ENCODE measurements at regions of chr6 and their contacts with region 1.

Region 1: DNA sequence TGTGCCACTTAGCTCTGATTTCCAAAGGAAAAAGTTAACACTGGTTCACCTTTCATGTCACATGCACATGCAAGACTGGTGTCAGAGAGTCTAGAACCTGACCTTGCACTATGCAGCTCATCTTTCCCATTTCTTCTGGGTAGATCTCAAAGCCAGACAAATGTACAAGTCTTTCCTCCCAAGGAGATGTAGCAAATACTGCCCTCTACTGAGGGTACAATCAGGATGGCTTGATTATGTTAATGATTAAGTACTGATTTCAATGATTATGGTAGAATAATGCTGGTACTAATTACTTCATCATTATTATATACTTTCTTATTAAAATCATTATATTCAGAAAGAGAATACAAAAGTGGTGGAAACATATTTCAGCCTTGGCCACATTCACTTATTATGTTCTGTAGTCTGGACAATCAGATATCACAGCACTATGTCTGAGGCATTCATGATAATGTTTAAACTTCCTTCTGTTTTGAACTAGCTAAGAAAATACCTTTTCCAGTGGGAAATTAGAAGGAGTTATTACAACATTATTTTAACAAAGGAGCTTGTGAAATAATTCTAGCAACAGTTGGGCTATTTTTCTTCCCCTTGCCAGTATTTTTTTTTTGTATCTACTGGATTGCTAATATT is 68.5 kb upstream of the FOXO3 start:
- DNase-seq: no peak
- ATAC-seq: no peak
- H3K4me3 ChIP-seq: no peak overlapping the region
- H3K27ac ChIP-seq: no peak overlapping the region
- H3K4me1 ChIP-seq: no peaks in the 10 kb centered on the region
- H3K27me3 ChIP-seq: no peaks in the 10 kb centered on the region

Region 2: DNA sequence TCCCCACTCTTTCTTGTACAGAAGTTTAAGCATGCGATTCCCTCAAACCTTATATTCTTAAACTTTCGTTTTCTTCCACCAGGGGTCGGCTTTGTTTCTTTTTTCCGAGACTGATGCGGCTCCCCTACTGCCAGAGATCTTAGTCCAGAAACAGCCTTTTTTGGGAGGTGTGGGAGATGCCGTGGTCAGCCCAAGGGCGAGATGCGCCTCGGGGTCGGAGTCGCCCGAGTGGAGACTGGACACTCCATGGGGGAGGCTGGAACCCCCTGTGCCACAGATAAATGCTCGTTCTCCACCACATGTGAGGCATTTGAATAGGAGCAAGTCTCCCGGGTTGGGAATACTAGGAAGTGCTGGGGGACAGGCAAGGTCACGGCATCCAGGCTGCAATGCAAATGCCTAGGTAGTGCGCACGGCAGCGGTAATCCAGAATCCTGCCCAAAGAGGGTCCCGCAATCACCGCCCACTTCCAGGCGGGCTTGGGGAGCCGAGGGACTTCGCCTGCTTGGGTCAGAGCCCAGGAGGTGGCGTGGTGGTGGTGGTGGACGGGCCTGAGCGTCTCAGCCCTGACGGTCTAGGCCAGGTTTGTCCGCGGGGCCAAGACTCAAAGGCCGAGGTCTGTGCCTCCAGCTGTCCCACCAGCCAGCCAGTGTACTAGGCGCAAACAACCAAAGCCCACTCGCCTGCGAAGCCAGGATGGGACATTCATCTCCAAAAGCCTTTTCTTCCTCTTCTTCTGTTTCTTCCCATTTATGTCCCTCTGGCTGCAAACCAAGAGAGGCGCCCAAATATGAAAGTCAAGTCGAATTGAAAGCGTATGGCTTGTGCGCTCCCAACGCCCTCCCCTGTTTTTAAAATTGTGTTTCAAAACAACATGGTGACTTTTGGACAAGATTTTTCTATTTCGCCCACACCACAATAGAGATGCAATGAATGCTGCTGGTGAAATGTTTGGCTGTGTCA is 378.4 kb before region 1 on chr6:
- intact Hi-C with region 1: loop called in 1 of 4 experiments (anchors 10 kb)
- DNase-seq: peak in 2 of 3 donors; percentile 20 to 56
- ATAC-seq: peak; percentile 18 to 37
- H3K4me3 ChIP-seq: peak overlapping the region; percentile 18
- H3K27ac ChIP-seq: no peak overlapping the region
- H3K4me1 ChIP-seq: peaks cover 2% of the 10 kb centered on the region
- H3K27me3 ChIP-seq: no peaks in the 10 kb centered on the region